ENCODE measurements at regions of chr9 and their contacts with region 1.

Region 1: DNA sequence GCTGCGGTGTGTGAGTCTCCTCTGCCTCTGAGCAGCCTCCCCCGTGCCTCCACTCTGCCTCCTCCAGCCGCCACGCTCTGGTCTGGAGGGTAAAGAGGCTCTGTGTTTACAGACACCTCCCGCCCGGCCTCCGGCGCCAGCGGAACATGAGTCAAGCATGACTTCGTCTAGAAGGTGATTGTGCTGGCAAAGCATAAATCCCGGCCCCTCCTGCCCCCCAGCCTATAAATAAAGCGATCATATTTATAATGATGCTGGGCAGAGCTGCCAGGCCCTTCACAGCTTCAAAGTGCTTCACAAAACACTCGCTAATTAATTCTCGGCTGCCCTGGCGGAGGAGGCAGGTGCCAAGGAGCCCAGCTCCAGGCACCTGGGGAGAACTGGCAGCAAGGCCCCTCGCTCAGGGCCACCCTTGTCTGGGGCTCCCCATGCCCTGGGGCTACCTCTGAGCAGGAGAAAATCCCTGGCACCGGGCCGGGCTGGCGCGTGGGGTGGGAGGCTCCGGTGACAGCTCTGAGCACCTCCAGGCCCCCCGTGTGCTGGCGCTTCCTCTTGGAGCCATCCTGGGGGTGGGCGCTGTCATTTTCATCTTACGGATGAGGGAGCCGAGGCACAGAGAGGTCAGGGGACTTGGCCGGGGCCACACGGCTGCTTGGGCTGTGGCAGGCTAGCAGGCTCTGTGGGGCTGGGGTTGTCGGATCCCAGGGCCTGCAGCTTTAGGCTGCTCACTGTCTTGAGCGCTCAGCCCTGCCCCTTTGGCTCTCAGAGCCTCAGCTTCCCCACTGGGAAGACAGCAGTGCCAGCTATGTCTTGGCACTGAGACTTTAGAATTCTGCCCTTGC is 87.9 kb downstream of the RXRA start:
- DNase-seq: peak in 1 of 2 experiments; percentile 81
- H3K4me3 ChIP-seq: no peak overlapping the region
- H3K27ac ChIP-seq: no peak overlapping the region
- H3K4me1 ChIP-seq: peaks cover 47% of the 10 kb centered on the region
- H3K27me3 ChIP-seq: no peaks in the 10 kb centered on the region
- CTCF ChIP-seq: no peak

Region 2: DNA sequence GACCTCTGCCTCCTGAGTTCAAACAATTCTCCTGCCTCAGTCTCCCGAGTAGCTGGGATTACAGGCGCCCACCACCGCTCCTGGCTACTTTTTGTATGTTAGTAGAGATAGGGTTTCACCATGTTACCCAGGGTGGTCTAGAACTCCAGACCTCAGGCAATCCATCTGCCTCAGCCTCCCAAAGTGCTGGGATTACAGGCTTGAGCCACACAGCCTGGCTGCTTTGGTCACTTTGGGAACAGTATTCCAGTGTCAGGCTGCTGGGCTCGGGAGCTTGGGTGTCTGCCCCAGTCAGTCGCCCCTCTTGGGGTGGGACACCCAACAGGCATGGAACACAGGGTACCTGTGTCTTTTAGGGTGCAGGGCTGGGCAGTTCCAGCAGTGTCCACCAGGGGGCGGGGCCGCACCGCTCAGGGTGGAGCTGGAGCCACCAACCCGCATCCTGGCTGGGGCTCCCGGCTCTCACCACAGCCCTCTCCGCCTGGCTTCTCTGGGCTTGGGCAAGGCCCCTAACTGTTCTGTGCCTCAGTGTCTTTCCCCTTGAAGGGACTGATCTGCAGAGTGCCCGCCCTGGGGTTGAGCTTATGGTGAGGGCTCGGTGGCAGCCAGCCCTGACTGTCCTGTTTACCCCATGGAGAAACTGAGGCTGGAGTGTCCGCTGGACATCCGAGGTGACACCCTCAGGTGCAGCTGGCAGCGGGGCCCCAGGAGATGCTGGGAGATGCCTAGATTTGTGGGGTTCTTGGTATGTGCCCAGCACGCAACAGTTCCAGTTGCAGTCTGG is 243.4 kb before region 1 on chr9:
- CTCF ChIA-PET with region 1: no interaction called
- POLR2A ChIA-PET with region 1: no interaction called
- intact Hi-C with region 1: loop called (anchors 1 kb)
- DNase-seq: peak in 1 of 2 experiments; percentile 20
- H3K4me3 ChIP-seq: no peak overlapping the region
- H3K27ac ChIP-seq: no peak overlapping the region
- H3K4me1 ChIP-seq: peaks cover 1% of the 10 kb centered on the region; the same call in 1 of the 2 replicates
- H3K27me3 ChIP-seq: no peaks in the 10 kb centered on the region
- CTCF ChIP-seq: no peak

Region 3: DNA sequence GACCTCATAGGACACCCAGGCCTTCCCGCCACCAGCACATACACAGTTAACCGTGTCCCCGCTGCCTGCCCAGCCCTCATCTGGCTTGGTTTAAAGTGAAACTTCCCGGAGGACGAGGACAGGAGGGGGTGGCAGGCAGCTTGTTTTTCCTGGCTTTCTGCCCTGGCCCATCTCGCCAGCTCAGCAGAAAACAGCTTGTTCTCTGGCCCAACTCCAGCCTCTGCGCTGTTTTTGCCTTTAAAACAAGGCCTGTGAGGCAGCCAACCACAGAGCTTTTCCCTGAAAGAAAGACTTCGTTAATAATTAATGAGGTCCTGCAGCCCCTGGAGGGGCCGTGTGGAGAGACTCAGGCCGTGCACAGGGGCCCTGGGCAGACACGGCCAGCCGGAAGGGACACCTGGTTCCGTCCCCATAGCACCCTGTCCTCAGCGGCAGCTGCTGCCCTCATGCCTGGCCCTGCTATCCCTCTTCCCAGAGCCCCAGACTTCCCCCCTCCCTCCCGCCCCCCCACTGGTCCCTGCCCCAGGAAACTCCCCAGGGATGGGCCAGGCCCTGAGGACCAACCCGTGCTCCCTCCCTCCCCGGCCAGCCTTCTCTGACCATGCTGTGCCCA is 20.9 kb after region 1 on chr9:
- CTCF ChIA-PET with region 1: interaction called, 3 read pairs
- POLR2A ChIA-PET with region 1: no interaction called
- intact Hi-C with region 1: loop called (anchors 2 kb)
- DNase-seq: peak in 1 of 2 experiments; percentile 74
- H3K4me3 ChIP-seq: no peak overlapping the region
- H3K27ac ChIP-seq: no peak overlapping the region
- H3K4me1 ChIP-seq: no peaks in the 10 kb centered on the region
- H3K27me3 ChIP-seq: no peaks in the 10 kb centered on the region
- CTCF ChIP-seq: no peak

Measured in PC-9 (cell line).